OCI-LY7 (cell line): ENCODE measurements at regions of chr19 and their contacts with region 1.

Region 1: DNA sequence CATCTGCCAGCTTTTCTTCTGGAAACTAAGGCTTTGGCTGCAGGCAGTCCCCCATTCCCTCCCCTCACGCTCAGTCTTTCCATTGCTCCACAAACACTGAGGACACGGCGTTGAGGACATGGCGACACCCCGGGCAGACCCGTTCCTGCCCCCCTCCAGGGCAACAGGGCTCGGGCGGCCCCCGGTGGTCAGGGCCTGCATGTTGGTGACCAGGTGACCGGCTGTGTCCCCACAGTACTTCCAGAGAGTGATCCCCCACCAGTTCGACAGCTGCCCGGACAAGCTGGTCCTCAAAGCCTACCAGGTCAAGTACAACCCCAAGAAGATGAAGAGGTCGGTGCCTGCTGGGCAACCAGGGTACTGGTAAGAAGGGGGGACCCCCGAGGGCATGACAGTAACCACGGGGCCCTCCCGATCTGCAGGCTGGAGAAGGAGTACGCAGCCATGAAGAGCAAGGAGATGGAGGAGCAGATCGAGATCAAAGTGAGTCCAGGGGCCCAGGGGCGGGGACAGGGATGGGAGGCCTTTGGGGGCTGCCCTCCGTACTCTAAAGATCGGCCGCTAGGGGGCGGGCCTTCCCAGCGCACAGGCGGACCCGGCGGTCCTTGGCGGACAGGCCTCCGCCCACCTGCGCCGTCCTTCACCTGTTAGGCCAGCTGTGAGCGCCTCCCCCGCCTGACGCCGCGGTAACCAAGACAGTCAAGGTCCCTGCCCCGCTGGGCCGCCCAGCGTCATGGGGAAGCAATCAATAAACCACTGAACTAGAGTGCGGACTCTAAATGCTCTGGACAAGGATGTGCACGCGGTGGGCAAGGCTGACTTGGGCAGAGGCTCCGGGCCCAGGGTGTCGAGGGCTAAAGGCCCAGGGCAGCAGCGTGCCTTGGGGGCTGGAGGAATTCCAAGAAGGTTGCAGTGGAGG is 21.1 kb downstream of the PRR36 start:
- DNase-seq: peak; percentile 74
- H3K4me3 ChIP-seq: no peak overlapping the region
- H3K27ac ChIP-seq: no peak overlapping the region
- H3K4me1 ChIP-seq: peaks cover 3% of the 10 kb centered on the region
- CTCF ChIP-seq: peak; percentile 87

Region 2: GRCh38 chr19:7925171-7925851 is 72.2 kb after region 1 on chr19:
- CTCF ChIA-PET with region 1: no interaction called
- POLR2A ChIA-PET with region 1: no interaction called
- intact Hi-C with region 1: loop called (anchors 1 kb)
- DNase-seq: peak; percentile 89
- H3K4me3 ChIP-seq: peak overlapping the region; percentile 66
- H3K27ac ChIP-seq: no peak overlapping the region
- H3K4me1 ChIP-seq: peaks cover 14% of the 10 kb centered on the region
- CTCF ChIP-seq: peak; percentile 89

Region 3: DNA sequence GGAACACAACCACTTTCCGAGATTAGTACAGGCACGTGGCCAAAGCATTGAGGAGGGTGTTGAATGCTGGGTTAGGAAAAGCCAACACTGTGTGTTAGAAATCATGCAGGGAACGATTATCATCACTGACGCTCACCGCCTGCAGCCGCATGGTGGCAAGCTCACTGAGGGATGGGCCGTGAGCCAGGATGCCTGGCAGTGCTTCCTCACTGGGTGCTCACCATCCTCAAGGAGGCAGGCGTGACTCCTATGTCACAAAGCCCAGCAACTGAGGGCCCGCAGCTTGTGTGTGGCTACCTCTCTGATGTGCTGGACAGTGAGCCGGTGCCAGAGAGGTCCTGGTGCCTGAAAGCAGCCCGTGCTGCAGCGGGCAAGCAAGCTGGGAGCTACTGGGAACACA is 120.8 kb after region 1 on chr19:
- CTCF ChIA-PET with region 1: no interaction called
- POLR2A ChIA-PET with region 1: no interaction called
- intact Hi-C with region 1: no loop called
- DNase-seq: no peak
- H3K4me3 ChIP-seq: no peak overlapping the region
- H3K27ac ChIP-seq: no peak overlapping the region
- H3K4me1 ChIP-seq: no peaks in the 10 kb centered on the region
- CTCF ChIP-seq: no peak